ENCODE measurements at regions of chr19 and their contacts with region 1.

Region 1: DNA sequence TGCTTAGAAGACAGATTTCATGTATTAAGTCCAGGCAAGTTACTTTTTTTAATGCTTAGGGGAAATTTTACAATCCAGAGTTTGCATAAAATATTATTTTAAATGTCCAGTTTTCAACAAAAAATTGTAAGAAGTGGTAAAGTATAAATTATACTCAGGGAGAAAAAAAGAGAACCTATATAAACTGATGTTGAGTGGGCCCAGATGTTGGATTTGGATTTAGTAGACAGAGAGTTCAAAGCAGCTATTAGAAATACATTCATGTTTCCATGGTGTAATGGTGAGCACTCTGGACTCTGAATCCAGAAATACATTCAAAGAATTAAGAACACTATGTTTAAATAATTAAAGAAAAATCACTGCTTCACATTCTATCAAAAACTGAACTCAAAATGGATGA is 349.9 kb upstream of the ZNF507 start:
- DNase-seq: no peak
- H3K4me3 ChIP-seq: no peak overlapping the region
- H3K27ac ChIP-seq: no peak overlapping the region
- H3K4me1 ChIP-seq: no peaks in the 10 kb centered on the region
- H3K27me3 ChIP-seq: no peaks in the 10 kb centered on the region
- CTCF ChIP-seq: no peak
- POLR2A ChIP-seq: no peak

Region 2: DNA sequence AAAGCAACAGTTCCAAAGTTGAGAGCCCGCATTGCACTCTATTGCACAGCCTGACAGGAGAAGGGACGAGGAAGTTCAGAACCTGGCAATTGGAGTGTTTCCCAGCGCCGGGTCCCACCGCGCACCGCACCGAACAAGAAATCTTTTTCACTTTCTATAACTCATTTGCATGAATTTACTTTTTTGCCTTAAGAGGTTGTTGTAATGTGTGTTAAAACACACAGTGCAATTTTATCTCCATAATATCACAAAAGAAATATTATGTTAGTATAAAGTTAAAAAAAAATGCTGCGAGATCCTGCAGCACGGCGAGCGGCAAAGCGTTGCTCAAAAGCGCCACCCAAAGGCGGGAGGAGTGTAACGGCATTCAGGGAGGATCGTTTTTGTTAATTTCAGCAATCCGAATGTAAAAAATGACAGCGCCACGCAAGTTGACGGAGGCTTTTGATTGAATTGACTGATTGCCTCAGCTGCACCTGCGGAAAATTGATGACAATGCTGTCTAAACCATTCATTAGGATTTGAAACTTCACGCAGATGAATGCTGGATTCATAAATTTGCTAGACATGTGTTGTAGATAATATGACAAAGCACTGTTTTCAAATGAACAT is 46.2 kb after region 1 on chr19:
- intact Hi-C with region 1: loop called (anchors 1 kb)
- DNase-seq: no peak
- H3K4me3 ChIP-seq: peak overlapping the region; percentile 18 to 24
- H3K27ac ChIP-seq: no peak overlapping the region
- H3K4me1 ChIP-seq: peaks cover 7% of the 10 kb centered on the region
- H3K27me3 ChIP-seq: peaks cover 3% of the 10 kb centered on the region
- CTCF ChIP-seq: peak; percentile 28 to 77 (median 44)
- POLR2A ChIP-seq: no peak

Region 3: GRCh38 chr19:32061281-32061680 is 65.7 kb after region 1 on chr19:
- intact Hi-C with region 1: no loop called
- DNase-seq: no peak
- H3K4me3 ChIP-seq: no peak overlapping the region
- H3K27ac ChIP-seq: no peak overlapping the region
- H3K4me1 ChIP-seq: no peaks in the 10 kb centered on the region
- H3K27me3 ChIP-seq: no peaks in the 10 kb centered on the region
- CTCF ChIP-seq: no peak
- POLR2A ChIP-seq: no peak

Region 4: DNA sequence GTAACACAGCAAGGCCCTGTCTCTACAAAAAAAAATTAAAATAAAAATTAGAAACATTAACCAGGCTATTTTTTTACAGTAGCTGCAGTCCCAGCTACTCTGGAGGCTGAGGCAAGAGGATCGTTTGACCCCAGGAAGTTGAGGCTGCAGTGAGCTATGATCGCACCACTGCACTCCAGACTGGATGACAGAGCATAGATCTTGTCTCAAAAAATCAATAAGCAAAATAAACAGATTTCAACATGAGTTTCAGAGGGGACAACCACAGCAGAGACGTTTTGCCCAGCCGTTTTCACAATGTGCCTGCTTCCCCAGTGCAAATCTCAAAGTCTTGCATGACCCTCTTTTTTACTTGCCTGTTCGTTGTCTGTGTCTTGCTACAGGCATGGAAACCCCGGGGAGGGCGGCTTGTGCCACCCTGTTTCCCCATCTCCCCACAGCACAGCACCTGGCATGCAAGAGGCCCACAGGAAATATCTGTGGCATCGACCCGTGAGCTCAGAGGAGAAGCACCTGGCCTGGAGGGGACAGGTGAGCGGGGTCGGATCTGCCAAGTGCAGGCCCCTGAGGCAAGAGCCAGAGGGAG is 127.9 kb after region 1 on chr19:
- intact Hi-C with region 1: no loop called
- DNase-seq: no peak
- H3K4me3 ChIP-seq: no peak overlapping the region
- H3K27ac ChIP-seq: no peak overlapping the region
- H3K4me1 ChIP-seq: no peaks in the 10 kb centered on the region
- H3K27me3 ChIP-seq: no peaks in the 10 kb centered on the region
- CTCF ChIP-seq: no peak
- POLR2A ChIP-seq: no peak